ENCODE measurements at regions of chr2 and their contacts with region 1.

Region 1: DNA sequence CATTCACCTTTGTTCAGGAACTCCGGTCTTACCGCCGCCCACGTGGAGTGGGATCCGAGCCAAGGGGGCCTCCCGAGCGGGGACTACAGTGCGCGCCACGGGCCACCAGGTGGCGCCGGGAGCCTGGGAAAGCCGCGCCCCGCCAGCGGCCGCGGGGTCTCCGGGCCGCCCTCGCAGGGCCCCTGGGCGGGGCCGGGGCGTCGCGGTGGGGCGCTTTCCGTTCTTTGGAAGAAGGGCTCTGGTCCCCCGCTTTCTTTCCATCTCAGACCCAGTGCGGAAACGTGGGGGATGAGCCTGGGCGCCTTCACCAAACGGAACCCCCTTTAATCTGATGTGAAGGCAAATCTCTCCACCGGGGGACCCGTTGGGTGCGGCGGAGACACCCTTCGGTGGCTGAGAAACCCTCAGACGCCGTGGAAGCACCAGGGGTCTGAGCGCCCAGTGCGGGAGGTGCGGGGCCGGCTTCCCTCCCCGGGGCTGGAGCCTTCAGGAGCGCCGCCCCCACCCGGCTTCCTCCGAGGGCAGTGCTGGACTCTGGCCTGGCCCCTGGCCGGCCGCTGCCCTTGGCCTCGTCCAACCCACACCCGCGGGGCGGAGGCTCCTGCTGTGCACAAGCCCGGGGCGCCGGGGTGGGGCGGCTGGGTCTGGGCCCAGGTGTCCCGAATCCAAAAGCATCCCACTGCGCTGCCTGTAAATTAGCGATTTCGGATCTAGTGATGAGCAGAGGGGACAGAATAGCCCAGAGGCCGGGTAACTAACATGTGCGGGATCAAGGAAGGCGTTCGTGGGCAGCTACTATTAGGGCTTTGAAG is 44.6 kb downstream of the GORASP2 start:
- DNase-seq: peak; percentile 55 to 95 (median 88)

Region 2: DNA sequence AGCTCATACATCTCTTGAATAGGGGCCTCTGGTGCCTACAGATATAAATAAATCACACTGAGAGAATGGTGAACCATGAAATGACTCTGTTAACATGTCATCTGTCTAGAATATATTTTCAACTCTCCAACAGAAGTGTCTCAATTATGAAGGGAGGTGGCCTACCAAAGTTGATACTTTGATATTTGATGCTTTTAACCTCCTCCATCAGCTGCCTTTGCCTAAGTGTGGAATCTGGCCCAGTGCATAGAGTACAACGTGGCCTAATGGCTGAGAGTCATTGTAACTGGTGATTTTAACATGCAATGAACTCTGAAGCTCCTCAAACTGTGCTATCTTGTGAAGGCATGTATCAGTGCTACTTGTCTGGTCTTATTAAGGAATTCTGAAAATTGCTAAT is 702.4 kb before region 1 on chr2:
- intact Hi-C with region 1: no loop called
- DNase-seq: no peak

Region 3: DNA sequence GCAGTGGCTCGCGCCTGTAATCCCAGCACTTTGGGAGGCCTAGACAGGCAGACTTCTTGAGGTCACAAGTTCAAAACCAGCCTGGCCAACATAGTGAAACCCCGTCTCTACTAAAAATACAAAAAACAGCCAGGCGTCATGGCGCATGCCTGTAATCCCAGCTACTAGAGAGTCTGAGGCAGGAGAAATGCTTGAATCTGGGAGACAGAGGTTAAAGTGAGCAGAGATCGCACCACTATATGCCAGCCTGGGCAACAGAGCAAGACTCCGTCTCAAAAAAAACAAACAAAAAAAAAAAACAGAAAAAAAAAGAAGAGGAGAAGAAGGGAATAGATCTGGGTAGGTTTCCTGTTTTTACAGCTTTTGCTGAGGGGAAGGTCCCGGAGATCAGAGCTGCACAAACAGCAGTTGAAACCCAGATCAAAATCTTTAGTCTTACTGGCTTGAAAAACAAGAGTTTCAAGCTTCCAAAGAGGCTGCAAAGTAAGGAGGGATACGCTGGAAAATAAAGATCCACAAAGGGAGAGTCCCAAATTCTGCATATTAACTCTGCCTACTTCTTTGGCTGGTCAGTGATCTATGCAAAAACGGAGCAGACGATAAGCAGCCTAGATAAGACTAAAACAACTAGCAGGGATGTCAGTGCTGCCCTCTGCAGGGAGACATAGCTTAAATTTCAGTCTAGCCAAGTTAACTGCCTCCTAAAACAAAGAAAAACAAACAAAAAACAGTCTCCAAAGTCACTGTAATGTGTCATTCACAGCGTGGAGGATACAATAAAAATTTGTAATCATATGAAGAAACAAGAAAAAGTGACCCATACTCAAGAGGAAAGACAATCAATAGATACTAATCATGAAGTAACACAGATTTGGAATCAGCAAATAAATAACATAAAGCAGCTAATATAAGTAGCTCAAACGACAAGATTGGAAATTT is 112.9 kb after region 1 on chr2:
- intact Hi-C with region 1: loop called (anchors 10 kb)
- DNase-seq: peak in 29 of 42 donors; percentile 18 to 76 (median 47)

Region 4: GRCh38 chr2:171160119-171160955 is 186.6 kb after region 1 on chr2 and contains the start of gene TLK1:
- intact Hi-C with region 1: loop called (anchors 5 kb)
- DNase-seq: peak; percentile 26 to 83 (median 66)

Measured in head of caudate nucleus (tissue), 42 donors.